A549 (cell line): ENCODE measurements at regions of chr1 and their contacts with region 1.

Region 1: GRCh38 chr1:39258146-39258924 is 53.8 kb downstream of the MACF1 start:
- DNase-seq: peak; percentile 64 to 80
- ATAC-seq: peak; percentile 90 to 94
- H3K4me3 ChIP-seq: no peak overlapping the region
- H3K27ac ChIP-seq: peak overlapping the region in 1 of 2 experiments; percentile 33; a peak in 1 of 6 replicates
- H3K4me1 ChIP-seq: 0 out of 3 replicates have a peak, but pooled peaks cover 6% of the 10 kb centered on the region
- CTCF ChIP-seq: peak; percentile 84
- EP300 ChIP-seq: no peak
- POLR2A ChIP-seq: no peak
- RAD21 ChIP-seq: peak; percentile 91 to 93

Region 2: DNA sequence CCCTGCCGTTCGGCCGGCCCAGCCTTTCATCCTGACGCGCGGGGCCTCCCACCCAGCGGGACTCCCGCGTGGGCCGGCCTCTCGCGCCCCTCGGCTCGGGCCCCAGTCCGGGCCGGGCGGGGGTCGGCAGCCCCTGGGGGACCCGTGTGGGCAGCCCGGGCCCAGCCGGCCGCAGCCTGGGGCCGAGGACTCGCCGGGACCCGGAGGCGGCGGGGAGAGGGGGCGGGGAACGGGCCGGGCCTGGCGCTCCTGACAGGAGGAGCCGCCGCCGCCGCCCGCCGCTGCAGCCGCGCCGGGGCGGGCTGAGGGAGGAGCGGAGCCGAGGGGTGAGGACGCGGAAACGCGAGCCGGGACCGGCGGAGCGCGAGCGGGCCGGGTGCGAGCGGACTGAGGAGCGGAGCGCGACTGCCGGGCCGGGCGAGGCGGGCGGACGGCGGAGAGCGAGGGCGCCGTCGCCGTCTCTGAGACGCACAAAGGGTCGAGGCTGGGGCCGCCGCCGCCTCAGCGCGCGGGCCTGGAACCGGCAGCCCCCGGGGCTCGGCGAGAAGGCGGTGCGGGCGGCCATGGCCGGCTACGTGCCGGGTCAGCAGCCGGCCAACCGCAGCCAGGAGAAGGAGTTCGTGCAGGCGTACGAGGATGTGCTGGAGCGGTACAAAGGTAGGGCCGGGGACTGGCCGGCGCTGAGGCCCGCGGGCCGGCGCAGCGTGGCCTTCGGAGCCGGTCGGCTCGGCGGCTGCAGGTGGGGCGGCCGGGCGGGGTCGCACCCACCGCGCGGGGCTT is 153.1 kb before region 1 on chr1:
- CTCF ChIA-PET with region 1: interaction called, 60 read pairs
- POLR2A ChIA-PET with region 1: no interaction called
- DNase-seq: peak in 1 of 2 experiments; percentile 38
- ATAC-seq: peak; percentile 68 to 76
- H3K4me3 ChIP-seq: peak overlapping the region; percentile 81
- H3K27ac ChIP-seq: peak overlapping the region; percentile 84 to 99
- H3K4me1 ChIP-seq: peaks cover 48% of the 10 kb centered on the region
- CTCF ChIP-seq: no peak
- EP300 ChIP-seq: no peak
- POLR2A ChIP-seq: peak; percentile 65
- RAD21 ChIP-seq: no peak

Region 3: GRCh38 chr1:39170731-39171667 is 87.3 kb before region 1 on chr1:
- CTCF ChIA-PET with region 1: interaction called, 17 read pairs
- POLR2A ChIA-PET with region 1: no interaction called
- DNase-seq: no peak
- ATAC-seq: peak in 1 of 2 experiments; percentile 32; a peak in 3 of 6 replicates
- H3K4me3 ChIP-seq: no peak overlapping the region
- H3K27ac ChIP-seq: peak overlapping the region; percentile 41 to 91; a peak in 4 of 6 replicates
- H3K4me1 ChIP-seq: peaks cover 75% of the 10 kb centered on the region
- CTCF ChIP-seq: no peak
- EP300 ChIP-seq: no peak
- POLR2A ChIP-seq: no peak
- RAD21 ChIP-seq: no peak

Region 4: DNA sequence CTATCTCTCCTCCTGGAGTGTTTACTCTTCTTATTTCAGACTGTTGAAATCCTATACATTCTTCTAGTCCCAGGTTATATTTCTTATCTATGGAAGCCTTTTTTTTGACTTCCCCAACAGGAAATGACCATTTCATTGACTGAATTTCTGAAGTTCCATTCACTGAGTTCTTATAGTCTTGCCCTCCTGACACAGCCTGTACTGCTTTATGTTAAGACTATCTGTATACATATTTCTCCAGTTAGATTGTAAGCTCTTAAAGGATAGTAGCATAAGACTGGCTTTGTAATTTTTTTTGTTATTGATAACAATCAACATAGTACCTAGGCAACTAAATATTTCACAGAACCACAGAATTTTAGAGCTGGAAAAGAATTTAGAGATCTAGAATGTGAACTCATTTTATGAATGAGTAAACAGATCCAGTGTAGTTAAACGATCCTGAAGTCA is 68.7 kb before region 1 on chr1:
- CTCF ChIA-PET with region 1: interaction called, 95 read pairs
- POLR2A ChIA-PET with region 1: interaction called, 7 read pairs
- DNase-seq: no peak
- ATAC-seq: no peak
- H3K4me3 ChIP-seq: no peak overlapping the region
- H3K27ac ChIP-seq: peak overlapping the region; percentile 83 to 94
- H3K4me1 ChIP-seq: peaks cover 92% of the 10 kb centered on the region
- CTCF ChIP-seq: no peak
- EP300 ChIP-seq: no peak
- POLR2A ChIP-seq: no peak
- RAD21 ChIP-seq: no peak

Region 5: DNA sequence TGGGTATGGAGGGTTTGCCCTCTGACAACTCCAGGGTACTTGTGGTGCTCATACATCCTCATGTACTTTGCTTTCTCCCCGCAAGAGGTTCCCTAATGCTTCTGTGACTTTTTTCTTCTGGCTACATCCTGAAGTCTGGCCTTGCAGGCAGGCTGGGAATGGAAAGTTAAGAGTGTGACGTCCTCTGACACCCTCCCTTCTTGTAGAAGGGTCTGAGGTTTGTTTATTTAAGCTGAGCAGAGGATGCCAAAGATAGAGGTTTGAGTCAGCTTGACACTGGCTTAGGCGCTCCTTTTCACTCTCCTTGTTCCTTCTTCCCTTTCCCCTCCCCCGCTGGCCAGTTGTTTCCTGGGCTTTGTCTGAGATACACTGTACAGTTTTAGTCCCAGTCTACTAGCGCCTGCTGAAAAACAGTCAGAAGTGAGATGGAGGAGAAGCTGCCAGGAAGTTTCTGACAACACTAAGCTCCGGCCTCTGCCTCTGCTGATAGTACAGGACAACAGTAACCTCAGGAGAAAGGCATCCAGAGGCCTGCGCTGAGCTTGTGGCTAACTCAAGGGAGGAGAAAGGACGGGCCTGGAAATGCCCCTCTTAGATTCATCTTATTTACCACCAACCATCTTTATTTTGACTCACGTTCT is 53.8 kb before region 1 on chr1 and contains the start of gene MACF1:
- CTCF ChIA-PET with region 1: interaction called, 18 read pairs
- POLR2A ChIA-PET with region 1: no interaction called
- DNase-seq: peak; percentile 50 to 82
- ATAC-seq: peak; percentile 91 to 95
- H3K4me3 ChIP-seq: peak within 1 kb of the TSS; percentile 35
- H3K27ac ChIP-seq: peak within 1 kb of the TSS; percentile 77 to 88
- H3K4me1 ChIP-seq: peaks cover 46% of the 10 kb centered on the region
- CTCF ChIP-seq: 0 out of 3 replicates have a peak, but pooled peaks have one; percentile 7
- EP300 ChIP-seq: no peak
- POLR2A ChIP-seq: no peak
- RAD21 ChIP-seq: peak in 1 of 2 experiments; percentile 6; a peak in 2 of 5 replicates
- polyA plus RNA-seq, gene MACF1: 64.2 and 75.7 TPM in 2 replicates

Region 6: DNA sequence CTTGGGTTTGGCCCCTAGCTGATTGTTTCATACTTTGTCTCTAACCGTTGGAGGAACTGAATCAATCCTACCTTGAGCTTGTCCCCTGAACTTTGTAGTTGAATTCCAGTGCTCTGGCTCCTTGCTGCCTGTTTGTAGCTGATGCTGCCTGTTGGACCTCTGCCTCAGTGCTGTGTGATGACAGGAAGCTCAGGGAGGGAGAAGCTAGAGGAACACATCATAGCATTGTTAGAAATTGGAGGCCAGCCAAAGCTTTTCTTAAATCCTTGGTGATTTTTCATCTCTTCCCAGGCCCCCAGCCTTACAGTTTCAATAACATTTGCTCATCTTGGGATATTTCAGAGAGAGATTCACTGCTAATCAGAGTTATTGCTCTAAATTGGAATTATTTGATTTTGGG is 19.9 kb before region 1 on chr1:
- CTCF ChIA-PET with region 1: interaction called, 18 read pairs
- POLR2A ChIA-PET with region 1: no interaction called
- DNase-seq: no peak
- ATAC-seq: no peak
- H3K4me3 ChIP-seq: no peak overlapping the region
- H3K27ac ChIP-seq: no peak overlapping the region
- H3K4me1 ChIP-seq: 0 out of 3 replicates have a peak, but pooled peaks cover 5% of the 10 kb centered on the region
- CTCF ChIP-seq: no peak
- EP300 ChIP-seq: no peak
- POLR2A ChIP-seq: no peak
- RAD21 ChIP-seq: no peak